Astrocyte of the cerebellum (primary cell): ENCODE measurements at regions of chr1 and their contacts with region 1.

Region 1: GRCh38 chr1:166902271-166902670 is 26.2 kb upstream of the TADA1 start:
- DNase-seq: no peak
- H3K4me3 ChIP-seq: no peak overlapping the region
- CTCF ChIP-seq: no peak

Region 2: GRCh38 chr1:166796620-166797236 is 105.5 kb before region 1 on chr1:
- in situ Hi-C with region 1: no loop called
- DNase-seq: no peak
- H3K4me3 ChIP-seq: no peak overlapping the region
- CTCF ChIP-seq: no peak

Region 3: GRCh38 chr1:167059045-167059808 is 157.0 kb after region 1 on chr1:
- in situ Hi-C with region 1: loop called (anchors 10 kb)
- DNase-seq: peak; percentile 43
- H3K4me3 ChIP-seq: no peak overlapping the region
- CTCF ChIP-seq: peak; percentile 94